B cell (primary cell): ENCODE measurements at regions of chr2 and their contacts with region 1.

Region 1: DNA sequence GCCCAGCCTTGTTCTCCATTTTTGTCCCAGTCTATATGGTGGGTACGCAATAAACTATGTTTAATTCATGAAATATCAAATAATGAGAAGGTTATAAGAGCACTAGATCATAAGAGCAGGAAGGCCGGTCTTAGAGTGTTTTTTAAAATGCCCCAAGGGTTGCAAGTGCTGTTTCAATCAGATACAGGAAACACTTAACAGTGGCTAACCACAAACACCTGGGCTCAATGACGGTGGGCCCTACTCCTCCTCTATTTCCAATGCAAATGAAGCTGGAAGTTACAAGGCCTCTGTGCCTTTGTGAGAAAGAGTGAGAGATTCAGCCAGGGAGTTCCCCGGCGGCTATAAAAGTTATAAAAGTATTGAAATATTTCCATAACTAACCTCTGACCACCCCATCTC is 18.9 kb upstream of the WDR33 start:
- DNase-seq: peak; percentile 91
- ATAC-seq: peak; percentile 92
- H3K4me3 ChIP-seq: peak overlapping the region in 2 of 5 experiments; percentile 17 to 18
- H3K4me3 Mint-ChIP-seq: peak overlapping the region; percentile 75
- H3K27ac ChIP-seq: peak overlapping the region; percentile 42 to 53
- H3K27ac Mint-ChIP-seq: peak overlapping the region; percentile 80
- H3K4me1 ChIP-seq: peaks cover 37 to 44% of the 10 kb centered on the region in 2 donors
- H3K4me1 Mint-ChIP-seq: peaks cover 50% of the 10 kb centered on the region
- H3K27me3 ChIP-seq: peaks cover 0 to 56% (median 8%) of the 10 kb centered on the region in 4 experiments
- H3K27me3 Mint-ChIP-seq: peaks cover 18% of the 10 kb centered on the region
- CTCF ChIP-seq: no peak

Region 2: DNA sequence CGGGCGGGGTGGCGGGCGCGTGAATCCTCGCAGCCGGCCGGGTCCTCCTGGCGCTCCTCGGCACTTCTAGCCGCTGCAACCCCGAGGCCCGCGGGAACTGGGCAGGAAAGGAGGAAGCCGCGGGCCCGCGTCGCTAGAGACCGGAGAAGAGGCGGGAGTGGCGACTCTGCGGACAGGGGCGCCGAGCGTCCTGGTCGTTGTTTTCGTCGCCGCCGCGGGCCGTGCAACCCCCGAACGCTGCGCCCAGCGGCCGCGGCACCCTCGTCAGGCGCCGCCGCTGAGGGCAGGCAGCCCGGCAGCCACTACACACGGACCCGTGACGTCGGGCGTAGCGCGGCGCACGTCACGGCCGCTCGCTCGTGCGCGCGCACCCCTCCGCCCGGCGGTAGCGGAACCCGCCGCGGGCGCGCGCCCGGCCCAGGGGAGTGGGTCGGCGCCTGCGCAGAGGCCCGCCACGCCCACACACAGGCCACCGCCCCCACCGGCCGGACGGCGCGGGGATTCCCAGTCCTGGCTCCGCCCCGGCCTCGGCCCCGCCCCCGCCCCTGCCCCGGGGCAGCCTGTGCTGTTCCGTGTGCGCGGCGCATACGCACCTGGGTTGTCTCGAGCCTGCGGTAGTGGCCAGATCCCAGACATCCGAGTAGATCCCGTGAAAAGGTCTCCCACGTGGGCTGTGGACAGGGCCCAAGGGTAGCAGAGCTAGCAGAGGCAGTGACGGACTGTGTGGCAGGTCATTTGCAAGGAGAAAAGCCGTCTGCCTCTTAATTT is 442.0 kb before region 1 on chr2 and contains the start of gene MAP3K2:
- CTCF ChIA-PET with region 1: no interaction called
- POLR2A ChIA-PET with region 1: no interaction called
- intact Hi-C with region 1: loop called (anchors 1 kb)
- DNase-seq: peak; percentile 97
- ATAC-seq: peak; percentile 74
- H3K4me3 ChIP-seq: peak within 1 kb of the TSS; percentile 73 to 95 (median 80)
- H3K4me3 Mint-ChIP-seq: peak within 1 kb of the TSS; percentile 92
- H3K27ac ChIP-seq: peak within 1 kb of the TSS; percentile 97 to 99
- H3K27ac Mint-ChIP-seq: peak within 1 kb of the TSS; percentile 99
- H3K4me1 ChIP-seq: peaks cover 50 to 57% of the 10 kb centered on the region in 2 donors
- H3K4me1 Mint-ChIP-seq: peaks cover 80% of the 10 kb centered on the region
- H3K27me3 ChIP-seq: no peaks in the 10 kb centered on the region
- H3K27me3 Mint-ChIP-seq: no peaks in the 10 kb centered on the region
- CTCF ChIP-seq: no peak
- total RNA-seq, gene MAP3K2: 112 and 118 TPM in 2 replicates

Region 3: DNA sequence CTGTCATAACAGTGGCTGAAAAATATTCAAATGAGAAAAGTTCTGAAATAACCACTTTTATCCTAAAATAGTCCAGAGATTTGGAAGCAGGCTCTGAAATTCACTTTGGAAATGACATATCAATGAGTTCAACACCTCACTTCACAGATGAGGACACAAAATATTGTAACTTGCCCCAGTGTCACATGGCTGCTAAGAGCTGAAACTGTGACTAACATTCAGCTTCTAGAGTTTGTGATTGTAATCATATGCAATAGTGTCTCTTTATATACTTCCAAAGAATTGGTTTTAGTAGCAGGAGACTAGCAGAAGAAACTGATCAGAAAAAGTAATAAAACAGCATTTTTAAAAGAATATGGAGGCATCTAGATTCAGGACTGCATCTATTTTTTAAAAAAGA is 76.5 kb before region 1 on chr2:
- CTCF ChIA-PET with region 1: no interaction called
- POLR2A ChIA-PET with region 1: no interaction called
- intact Hi-C with region 1: loop called (anchors 1 kb)
- DNase-seq: no peak
- ATAC-seq: no peak
- H3K4me3 ChIP-seq: no peak overlapping the region
- H3K4me3 Mint-ChIP-seq: no peak overlapping the region
- H3K27ac ChIP-seq: no peak overlapping the region
- H3K27ac Mint-ChIP-seq: no peak overlapping the region
- H3K4me1 ChIP-seq: peaks cover 13 to 16% of the 10 kb centered on the region in 2 donors
- H3K4me1 Mint-ChIP-seq: peaks cover 19% of the 10 kb centered on the region
- H3K27me3 ChIP-seq: no peaks in the 10 kb centered on the region
- H3K27me3 Mint-ChIP-seq: no peaks in the 10 kb centered on the region
- CTCF ChIP-seq: no peak

Region 4: DNA sequence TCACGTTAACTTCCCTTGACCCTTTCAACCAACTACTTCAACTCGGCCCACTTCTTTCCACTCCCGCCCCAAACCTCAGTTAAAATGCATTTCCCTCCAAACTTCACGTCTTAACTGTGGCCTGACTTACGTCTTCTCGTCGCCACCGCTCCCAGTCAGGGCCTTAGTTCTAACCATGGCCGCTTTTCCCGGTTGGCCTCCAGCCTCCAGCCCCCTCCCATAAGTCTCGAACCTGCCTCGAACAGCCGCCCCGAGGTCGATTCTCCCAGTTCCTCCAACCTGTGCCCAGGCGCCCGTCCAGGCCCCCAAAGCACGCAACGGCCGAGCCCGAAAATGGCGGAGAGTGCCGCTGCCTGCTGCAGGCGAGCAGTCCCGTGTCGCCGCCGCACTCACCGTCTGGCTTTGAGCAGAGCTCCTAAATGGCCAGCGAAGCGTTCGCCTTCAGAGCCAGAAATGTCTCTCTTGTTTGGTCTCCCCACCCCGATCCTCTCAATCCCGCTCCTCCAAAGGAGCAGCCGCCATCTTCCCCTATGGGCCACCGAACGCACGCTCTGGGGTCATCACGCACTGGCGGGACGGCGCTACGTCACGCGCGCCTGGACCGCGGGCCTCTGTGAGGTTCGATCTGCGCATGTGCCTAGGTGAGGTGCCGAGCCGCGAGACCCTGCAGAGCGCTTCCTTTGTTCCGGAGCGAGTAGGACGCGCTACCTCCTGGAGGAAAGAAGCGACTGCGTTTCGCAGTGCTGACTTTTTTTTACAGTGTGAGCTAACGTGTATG is 19.0 kb before region 1 on chr2 and contains the start of gene WDR33:
- CTCF ChIA-PET with region 1: interaction called, 8 read pairs
- POLR2A ChIA-PET with region 1: interaction called, 4 read pairs
- intact Hi-C with region 1: loop called (anchors 1 kb)
- DNase-seq: peak; percentile 96
- ATAC-seq: peak; percentile 97
- H3K4me3 ChIP-seq: peak within 1 kb of the TSS; percentile 66 to 99 (median 78)
- H3K4me3 Mint-ChIP-seq: peak within 1 kb of the TSS; percentile 97
- H3K27ac ChIP-seq: peak within 1 kb of the TSS; percentile 91 to 96
- H3K27ac Mint-ChIP-seq: peak within 1 kb of the TSS; percentile 99
- H3K4me1 ChIP-seq: peaks cover 30 to 37% of the 10 kb centered on the region in 2 donors
- H3K4me1 Mint-ChIP-seq: peaks cover 46% of the 10 kb centered on the region
- H3K27me3 ChIP-seq: no peaks in the 10 kb centered on the region
- H3K27me3 Mint-ChIP-seq: no peaks in the 10 kb centered on the region
- CTCF ChIP-seq: no peak
- total RNA-seq, gene WDR33: 95.2 and 101 TPM in 2 replicates

Region 5: GRCh38 chr2:127857265-127857808 is 27.5 kb after region 1 on chr2:
- CTCF ChIA-PET with region 1: no interaction called
- POLR2A ChIA-PET with region 1: no interaction called
- intact Hi-C with region 1: loop called (anchors 1 kb)
- DNase-seq: no peak
- ATAC-seq: no peak
- H3K4me3 ChIP-seq: peak overlapping the region; percentile 68 to 87 (median 80)
- H3K4me3 Mint-ChIP-seq: peak overlapping the region; percentile 88
- H3K27ac ChIP-seq: peak overlapping the region; percentile 41 to 85
- H3K27ac Mint-ChIP-seq: peak overlapping the region; percentile 57
- H3K4me1 ChIP-seq: peaks cover 16 to 36% of the 10 kb centered on the region in 2 donors
- H3K4me1 Mint-ChIP-seq: peaks cover 46% of the 10 kb centered on the region
- H3K27me3 ChIP-seq: no peaks in the 10 kb centered on the region
- H3K27me3 Mint-ChIP-seq: no peaks in the 10 kb centered on the region
- CTCF ChIP-seq: no peak